ENCODE measurements at regions of chr11 and their contacts with region 1.

Region 1: DNA sequence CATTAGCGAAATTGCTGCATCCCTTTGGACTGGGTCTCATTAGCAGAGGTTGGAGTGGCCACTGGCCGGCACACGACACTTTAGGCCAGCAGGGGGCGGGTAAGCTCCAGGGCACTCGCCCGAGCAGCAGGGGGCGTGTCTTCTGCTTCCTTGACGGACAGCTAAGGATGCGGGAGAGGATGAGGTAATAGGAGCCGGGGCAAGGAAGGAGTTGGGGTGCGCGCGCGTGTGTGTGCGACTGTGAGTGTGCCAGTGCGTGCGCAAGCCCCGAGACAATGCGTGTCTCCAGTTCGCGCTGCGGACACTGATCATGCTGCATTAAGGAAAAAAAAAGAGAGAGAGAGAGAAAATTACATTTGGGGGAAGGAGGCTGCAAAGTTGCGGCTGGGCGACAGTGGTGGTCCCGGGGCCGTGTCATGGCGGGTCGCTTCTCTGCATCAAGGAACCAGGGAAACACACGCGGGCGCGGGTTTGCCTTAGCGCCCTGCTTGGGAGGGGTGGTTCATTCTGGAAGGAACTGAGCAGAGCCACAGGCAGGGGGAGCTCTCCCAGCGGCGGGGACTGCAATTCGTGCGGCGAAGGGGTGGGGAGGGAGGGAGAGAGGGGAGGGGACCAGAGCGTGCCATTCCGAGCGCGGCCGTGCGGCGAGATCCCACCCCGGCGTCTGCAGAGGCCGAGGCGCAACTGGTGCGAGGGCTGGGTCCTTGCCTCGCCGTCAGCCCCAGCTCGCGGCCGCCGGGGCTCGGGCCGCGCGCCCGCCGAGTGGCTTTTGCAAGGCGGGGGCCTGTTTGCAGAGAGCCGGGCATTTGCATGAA is at the start of gene DTX4:
- DNase-seq: peak; percentile 90
- CTCF ChIP-seq: peak; percentile 99

Region 2: GRCh38 chr11:59207988-59208451 is 36.3 kb after region 1 on chr11:
- in situ Hi-C with region 1: loop called (anchors 5 kb)
- DNase-seq: peak; percentile 64
- CTCF ChIP-seq: peak; percentile 64

Measured in GM13976 (cell line).